ENCODE measurements at regions of chr1 and their contacts with region 1.

Region 1: GRCh38 chr1:180178511-180179161 is 24.0 kb downstream of the QSOX1 start:
- DNase-seq: peak; percentile 50 to 63 (median 53)
- H3K4me3 ChIP-seq: no peak overlapping the region
- H3K4me3 Mint-ChIP-seq: no peak overlapping the region
- H3K27ac ChIP-seq: no peak overlapping the region
- H3K27ac Mint-ChIP-seq: peak overlapping the region in 3 of 7 donors; percentile 38 to 86 (median 47)
- H3K4me1 ChIP-seq: no peaks in the 10 kb centered on the region
- H3K4me1 Mint-ChIP-seq: peaks cover 0 to 4% (median 0%) of the 10 kb centered on the region in 4 donors
- H3K27me3 ChIP-seq: no peaks in the 10 kb centered on the region
- H3K27me3 Mint-ChIP-seq: no peaks in the 10 kb centered on the region

Region 2: DNA sequence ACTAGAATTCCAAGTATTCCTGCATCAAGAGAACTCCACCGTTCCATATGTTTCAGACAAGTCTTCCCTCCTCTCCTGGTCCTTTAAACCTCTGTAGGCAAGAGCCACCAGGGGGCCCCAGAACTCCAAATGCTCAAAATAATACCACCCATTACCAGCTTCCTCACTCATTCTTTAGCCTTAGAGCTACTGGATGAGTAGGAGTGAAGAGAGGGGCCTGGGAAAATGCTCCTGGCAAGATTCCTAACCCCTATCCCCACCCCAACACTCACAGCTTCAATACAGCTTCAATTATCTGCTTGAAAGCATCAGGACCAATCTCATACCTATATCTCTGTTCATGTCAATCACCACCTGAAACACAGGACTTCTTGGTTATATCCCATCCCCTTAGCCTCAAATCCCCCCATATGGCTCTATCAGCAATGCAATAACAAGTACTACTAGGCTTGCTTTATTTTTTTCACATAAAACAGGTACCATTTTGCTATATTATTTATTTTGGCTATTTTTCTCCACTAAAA is 310.8 kb before region 1 on chr1:
- CTCF ChIA-PET with region 1: interaction called, 98 read pairs
- POLR2A ChIA-PET with region 1: no interaction called
- intact Hi-C with region 1: loop called (anchors 1 kb)
- DNase-seq: peak; percentile 42 to 54 (median 53)
- H3K4me3 ChIP-seq: no peak overlapping the region
- H3K4me3 Mint-ChIP-seq: no peak overlapping the region
- H3K27ac ChIP-seq: no peak overlapping the region
- H3K27ac Mint-ChIP-seq: peak overlapping the region in 4 of 7 donors; percentile 10 to 33 (median 14)
- H3K4me1 ChIP-seq: peaks cover 17% of the 10 kb centered on the region
- H3K4me1 Mint-ChIP-seq: peaks cover 13 to 22% (median 19%) of the 10 kb centered on the region in 4 donors
- H3K27me3 ChIP-seq: no peaks in the 10 kb centered on the region
- H3K27me3 Mint-ChIP-seq: no peaks in the 10 kb centered on the region

Region 3: GRCh38 chr1:180057883-180058396 is 120.7 kb before region 1 on chr1:
- CTCF ChIA-PET with region 1: interaction called, 10 read pairs
- POLR2A ChIA-PET with region 1: no interaction called
- intact Hi-C with region 1: no loop called
- DNase-seq: no peak
- H3K4me3 ChIP-seq: no peak overlapping the region
- H3K4me3 Mint-ChIP-seq: no peak overlapping the region
- H3K27ac ChIP-seq: no peak overlapping the region
- H3K27ac Mint-ChIP-seq: peak overlapping the region in 1 of 7 donors; percentile 22
- H3K4me1 ChIP-seq: no peaks in the 10 kb centered on the region
- H3K4me1 Mint-ChIP-seq: peaks cover 0 to 2% (median 0%) of the 10 kb centered on the region in 4 donors
- H3K27me3 ChIP-seq: no peaks in the 10 kb centered on the region
- H3K27me3 Mint-ChIP-seq: no peaks in the 10 kb centered on the region

Region 4: GRCh38 chr1:180092931-180093559 is 85.6 kb before region 1 on chr1:
- CTCF ChIA-PET with region 1: interaction called, 12 read pairs
- POLR2A ChIA-PET with region 1: no interaction called
- intact Hi-C with region 1: loop called (anchors 5 kb)
- DNase-seq: no peak
- H3K4me3 ChIP-seq: no peak overlapping the region
- H3K4me3 Mint-ChIP-seq: no peak overlapping the region
- H3K27ac ChIP-seq: no peak overlapping the region
- H3K27ac Mint-ChIP-seq: peak overlapping the region in 2 of 7 donors; percentile 5 to 18
- H3K4me1 ChIP-seq: no peaks in the 10 kb centered on the region
- H3K4me1 Mint-ChIP-seq: peaks cover 0 to 6% (median under 1%) of the 10 kb centered on the region in 4 donors
- H3K27me3 ChIP-seq: no peaks in the 10 kb centered on the region
- H3K27me3 Mint-ChIP-seq: no peaks in the 10 kb centered on the region

Region 5: DNA sequence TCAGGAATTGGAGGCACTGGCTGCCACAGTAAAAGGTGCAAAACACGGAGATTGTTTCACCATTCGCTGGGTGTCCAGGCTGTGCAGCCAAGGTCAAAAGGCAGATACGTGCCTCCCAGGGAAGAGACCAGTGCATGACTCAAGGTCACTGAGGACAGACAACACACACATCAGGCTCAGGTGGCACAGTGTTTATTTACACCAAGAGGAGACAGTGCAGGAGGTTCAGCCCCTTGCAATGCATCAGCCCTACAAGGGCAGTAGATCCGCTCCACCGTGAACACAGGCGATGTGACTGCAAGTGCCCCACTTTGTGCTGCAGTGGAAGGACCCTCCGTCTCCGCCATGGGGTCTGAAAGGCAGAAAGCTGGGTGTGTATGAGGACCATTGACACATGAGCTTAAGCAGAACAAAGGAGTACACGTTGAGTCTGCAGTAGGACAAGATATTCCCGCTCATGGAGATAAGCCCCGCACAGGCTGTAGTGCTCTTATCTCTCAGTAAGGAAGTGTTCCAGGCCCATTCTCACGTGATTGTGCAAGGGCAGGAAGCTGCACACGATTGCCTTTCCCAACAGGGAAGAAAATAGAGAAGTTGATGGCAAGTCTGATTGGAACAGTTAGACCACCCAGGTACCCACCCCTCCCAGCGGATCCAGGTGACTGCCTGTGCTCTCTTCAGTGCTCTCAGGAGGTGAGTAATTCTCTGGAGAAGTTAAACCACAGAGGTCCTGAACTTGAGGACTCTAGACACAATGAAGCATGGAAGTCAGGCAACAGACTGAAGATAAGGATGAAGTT is 61.5 kb before region 1 on chr1:
- CTCF ChIA-PET with region 1: interaction called, 23 read pairs
- POLR2A ChIA-PET with region 1: no interaction called
- intact Hi-C with region 1: loop called (anchors 10 kb)
- DNase-seq: no peak
- H3K4me3 ChIP-seq: no peak overlapping the region
- H3K4me3 Mint-ChIP-seq: no peak overlapping the region
- H3K27ac ChIP-seq: no peak overlapping the region
- H3K27ac Mint-ChIP-seq: peak overlapping the region in 1 of 7 donors; percentile 8
- H3K4me1 ChIP-seq: no peaks in the 10 kb centered on the region
- H3K4me1 Mint-ChIP-seq: no peaks in the 10 kb centered on the region
- H3K27me3 ChIP-seq: no peaks in the 10 kb centered on the region
- H3K27me3 Mint-ChIP-seq: no peaks in the 10 kb centered on the region

Region 6: GRCh38 chr1:180563026-180563827 is 384.6 kb after region 1 on chr1:
- CTCF ChIA-PET with region 1: no interaction called
- POLR2A ChIA-PET with region 1: no interaction called
- intact Hi-C with region 1: no loop called
- DNase-seq: no peak
- H3K4me3 ChIP-seq: no peak overlapping the region
- H3K4me3 Mint-ChIP-seq: no peak overlapping the region
- H3K27ac ChIP-seq: no peak overlapping the region
- H3K27ac Mint-ChIP-seq: no peak overlapping the region
- H3K4me1 ChIP-seq: no peaks in the 10 kb centered on the region
- H3K4me1 Mint-ChIP-seq: no peaks in the 10 kb centered on the region
- H3K27me3 ChIP-seq: no peaks in the 10 kb centered on the region
- H3K27me3 Mint-ChIP-seq: peaks cover 4 to 12% of the 10 kb centered on the region in 2 donors

Measured in CD4-positive, alpha-beta memory T cell (primary cell).